ENCODE measurements at regions of chr15 and their contacts with region 1.

Region 1: GRCh38 chr15:59830873-59831272 is 141.8 kb upstream of the BNIP2 start:
- DNase-seq: no peak
- ATAC-seq: no peak
- H3K4me3 ChIP-seq: no peak overlapping the region
- H3K4me3 Mint-ChIP-seq: no peak overlapping the region
- H3K27ac ChIP-seq: no peak overlapping the region
- H3K27ac Mint-ChIP-seq: no peak overlapping the region
- H3K4me1 ChIP-seq: peaks cover 0 to 9% of the 10 kb centered on the region in 2 experiments
- H3K4me1 Mint-ChIP-seq: peaks cover 0 to 13% (median 9%) of the 10 kb centered on the region in 3 donors
- H3K27me3 ChIP-seq: no peaks in the 10 kb centered on the region
- H3K27me3 Mint-ChIP-seq: no peaks in the 10 kb centered on the region

Region 2: DNA sequence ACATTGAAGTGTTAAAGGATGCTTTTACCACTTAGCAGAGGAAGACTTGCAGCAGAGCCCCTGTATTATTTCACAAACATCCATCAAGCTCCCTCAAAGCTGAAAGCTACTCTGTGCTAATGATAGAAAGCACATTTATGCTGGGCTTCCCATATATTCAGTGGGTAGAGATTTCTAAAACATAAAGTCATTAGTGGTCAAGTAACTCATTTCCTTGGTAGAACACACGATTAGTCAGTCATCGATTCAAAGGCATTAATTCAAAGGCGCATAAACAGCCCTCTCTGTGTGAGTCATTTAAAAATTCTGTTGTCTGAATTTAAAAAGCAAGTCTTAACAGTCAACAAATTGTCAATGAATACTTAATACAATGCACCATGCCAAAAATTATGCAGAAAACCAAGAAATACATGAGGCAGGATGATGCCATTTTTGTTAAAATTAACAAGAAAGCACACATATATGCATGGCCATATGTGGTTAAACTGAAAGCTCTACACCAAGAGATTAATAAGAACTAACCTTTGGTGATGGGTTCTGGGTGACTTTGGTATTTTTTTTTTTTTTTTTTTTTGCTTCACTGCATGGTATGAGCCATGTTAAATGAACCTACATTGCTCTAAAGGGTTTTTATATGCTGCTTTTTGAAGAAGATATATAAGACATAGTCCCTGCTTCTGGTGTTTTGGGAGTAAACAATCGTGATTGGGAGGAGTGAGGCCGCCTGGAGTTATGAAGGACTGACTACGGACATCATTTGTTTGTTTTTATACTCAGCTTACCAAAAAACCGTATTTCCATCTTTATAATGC is 562.5 kb before region 1 on chr15:
- CTCF ChIA-PET with region 1: no interaction called
- POLR2A ChIA-PET with region 1: no interaction called
- DNase-seq: no peak
- ATAC-seq: no peak
- H3K4me3 ChIP-seq: no peak overlapping the region
- H3K4me3 Mint-ChIP-seq: no peak overlapping the region
- H3K27ac ChIP-seq: no peak overlapping the region
- H3K27ac Mint-ChIP-seq: no peak overlapping the region
- H3K4me1 ChIP-seq: no peaks in the 10 kb centered on the region
- H3K4me1 Mint-ChIP-seq: no peaks in the 10 kb centered on the region
- H3K27me3 ChIP-seq: no peaks in the 10 kb centered on the region
- H3K27me3 Mint-ChIP-seq: peaks cover 7 to 11% of the 10 kb centered on the region in 2 donors

Region 3: DNA sequence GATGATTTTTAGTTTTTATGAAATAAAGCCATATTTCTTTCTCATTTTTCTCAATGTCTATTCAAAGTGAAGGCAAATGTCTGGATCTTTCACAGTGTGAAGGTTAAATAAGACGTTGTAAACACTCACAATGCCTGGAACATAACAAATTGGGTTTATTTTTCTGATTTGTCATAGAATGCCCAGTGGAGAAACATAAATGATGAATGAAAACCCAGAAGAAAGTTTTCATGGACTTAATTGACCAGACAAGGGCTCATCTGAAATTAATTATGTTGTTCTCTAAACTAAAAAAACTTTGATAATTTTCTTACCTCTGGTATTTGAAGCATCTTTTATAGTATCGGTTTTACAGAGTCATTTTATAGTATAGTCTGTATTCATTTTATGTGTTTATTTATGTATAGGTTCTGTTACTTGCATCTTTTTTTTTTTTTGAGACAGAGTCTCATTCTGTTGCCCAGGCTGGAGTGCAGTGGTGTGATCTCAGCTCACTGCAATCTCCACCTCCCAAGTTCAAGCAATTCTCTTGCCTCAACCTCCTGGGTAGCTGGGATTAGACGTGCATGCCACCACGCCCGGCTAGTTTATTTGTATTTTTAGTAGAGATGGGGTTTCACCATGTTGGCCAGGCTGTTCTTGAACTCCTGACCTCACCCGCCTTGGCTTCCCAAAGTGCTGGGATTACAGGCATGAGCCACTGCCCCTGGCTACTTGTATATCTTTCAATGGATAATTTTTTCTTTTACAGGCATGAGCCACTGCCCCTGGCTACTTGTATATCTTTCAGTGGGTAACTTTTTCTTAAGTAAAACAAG is 126.7 kb before region 1 on chr15:
- CTCF ChIA-PET with region 1: no interaction called
- POLR2A ChIA-PET with region 1: no interaction called
- DNase-seq: no peak
- ATAC-seq: no peak
- H3K4me3 ChIP-seq: no peak overlapping the region
- H3K4me3 Mint-ChIP-seq: no peak overlapping the region
- H3K27ac ChIP-seq: no peak overlapping the region
- H3K27ac Mint-ChIP-seq: no peak overlapping the region
- H3K4me1 ChIP-seq: no peaks in the 10 kb centered on the region
- H3K4me1 Mint-ChIP-seq: no peaks in the 10 kb centered on the region
- H3K27me3 ChIP-seq: no peaks in the 10 kb centered on the region
- H3K27me3 Mint-ChIP-seq: peaks cover 2 to 3% of the 10 kb centered on the region in 2 donors

Region 4: DNA sequence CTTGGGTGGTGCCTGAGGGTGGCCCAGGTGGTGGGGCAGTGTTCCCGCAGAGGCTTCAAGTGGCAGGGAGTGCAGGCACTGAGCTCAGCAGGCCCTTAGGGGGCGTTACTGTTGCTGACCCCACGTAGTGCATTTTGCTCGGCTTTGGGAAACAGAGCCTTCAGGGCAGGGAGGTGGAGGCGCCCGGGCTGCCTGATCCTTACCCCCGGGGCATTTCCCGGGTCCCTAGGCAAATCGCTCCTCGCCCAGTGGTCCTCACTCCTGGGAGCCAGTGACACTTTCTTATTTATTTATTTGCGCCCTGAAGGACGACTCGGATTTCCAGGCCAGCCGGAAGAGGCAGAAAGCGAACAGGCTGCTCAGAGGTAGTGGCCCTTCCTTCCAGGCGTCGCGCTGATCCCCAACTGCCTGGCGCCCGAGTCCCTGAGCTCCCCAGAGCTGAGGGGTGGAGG is 163.1 kb after region 1 on chr15:
- CTCF ChIA-PET with region 1: no interaction called
- POLR2A ChIA-PET with region 1: interaction called in 1 of 2 experiments, 15 read pairs
- DNase-seq: no peak
- ATAC-seq: no peak
- H3K4me3 ChIP-seq: no peak overlapping the region
- H3K4me3 Mint-ChIP-seq: no peak overlapping the region
- H3K27ac ChIP-seq: no peak overlapping the region
- H3K27ac Mint-ChIP-seq: peak overlapping the region in 1 of 2 donors; percentile 36
- H3K4me1 ChIP-seq: peaks cover 8 to 33% of the 10 kb centered on the region in 2 experiments
- H3K4me1 Mint-ChIP-seq: peaks cover 25 to 36% (median 31%) of the 10 kb centered on the region in 3 donors
- H3K27me3 ChIP-seq: peaks cover 20 to 55% of the 10 kb centered on the region in 2 experiments
- H3K27me3 Mint-ChIP-seq: peaks cover 65 to 84% of the 10 kb centered on the region in 2 donors